ENCODE measurements at regions of chr3 and their contacts with region 1.

Region 1: DNA sequence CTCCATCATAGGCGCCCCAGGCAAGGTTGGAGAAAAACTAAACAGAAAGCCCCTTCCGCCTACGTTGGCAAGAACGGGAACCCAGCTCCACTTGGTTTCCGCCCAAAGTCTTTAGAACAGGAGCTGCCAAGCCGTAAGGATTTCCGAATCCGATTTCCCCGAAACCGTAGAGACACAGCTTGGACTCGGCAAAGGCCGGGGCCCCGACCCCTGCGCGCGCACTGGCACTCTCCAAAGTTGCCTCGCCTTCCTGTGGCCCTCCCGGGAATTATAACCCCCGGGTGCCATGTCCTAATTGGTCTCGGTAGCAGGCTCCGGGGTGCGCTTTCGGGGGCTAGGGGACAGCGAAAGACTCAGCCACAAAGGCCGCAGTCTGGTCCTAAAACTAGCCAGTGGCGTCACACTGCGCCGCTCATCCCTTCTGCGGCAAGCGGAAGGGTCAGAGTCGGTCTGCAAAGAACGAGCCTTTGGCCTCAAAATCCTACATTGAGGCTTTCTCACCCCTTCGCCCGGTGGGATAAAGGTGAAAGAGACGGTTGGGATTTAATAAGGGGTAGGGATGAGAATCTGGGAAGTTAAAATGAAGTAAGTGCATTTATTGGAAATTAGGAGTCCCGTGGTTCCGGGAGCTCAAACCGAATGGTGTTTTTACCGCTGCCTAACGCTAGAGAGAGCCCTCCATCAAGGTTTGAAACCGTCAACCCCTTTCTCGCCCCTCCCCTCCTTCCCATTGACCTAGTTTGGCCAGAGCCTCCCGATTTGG is 6.8 kb downstream of the BCL6 start:
- DNase-seq: peak; percentile 69
- H3K4me3 Mint-ChIP-seq: peak overlapping the region; percentile 94
- H3K27ac Mint-ChIP-seq: peak overlapping the region; percentile 70
- H3K4me1 Mint-ChIP-seq: peaks cover 38% of the 10 kb centered on the region
- H3K27me3 Mint-ChIP-seq: peaks cover 12% of the 10 kb centered on the region

Region 2: DNA sequence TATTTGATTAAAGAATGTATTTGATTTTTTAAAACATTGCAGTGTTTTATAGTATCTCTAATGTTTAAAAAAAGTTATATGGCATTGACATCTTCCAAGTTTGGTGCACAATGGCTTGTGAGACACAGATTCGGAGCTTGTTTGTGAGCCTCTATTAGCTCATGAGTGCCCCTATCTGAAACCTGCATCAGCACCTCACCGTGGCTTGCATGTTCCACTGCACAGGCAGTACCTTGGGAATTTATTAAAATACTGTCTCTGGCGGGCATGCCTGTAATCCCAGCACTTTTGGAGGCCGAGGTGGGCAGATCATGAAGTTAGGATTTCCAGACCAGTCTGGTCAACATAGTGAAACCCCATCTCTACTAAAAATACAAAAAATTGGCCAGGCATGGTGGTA is 29.4 kb before region 1 on chr3:
- intact Hi-C with region 1: no loop called
- DNase-seq: no peak
- H3K4me3 Mint-ChIP-seq: no peak overlapping the region
- H3K27ac Mint-ChIP-seq: no peak overlapping the region
- H3K4me1 Mint-ChIP-seq: peaks cover 4% of the 10 kb centered on the region
- H3K27me3 Mint-ChIP-seq: peaks cover 23% of the 10 kb centered on the region

Region 3: GRCh38 chr3:188286087-188286513 is 547.6 kb after region 1 on chr3:
- intact Hi-C with region 1: loop called (anchors 1 kb)
- DNase-seq: no peak
- H3K4me3 Mint-ChIP-seq: no peak overlapping the region
- H3K27ac Mint-ChIP-seq: peak overlapping the region; percentile 5
- H3K4me1 Mint-ChIP-seq: peaks cover 52% of the 10 kb centered on the region
- H3K27me3 Mint-ChIP-seq: no peaks in the 10 kb centered on the region

Region 4: GRCh38 chr3:188400494-188401243 is 662.2 kb after region 1 on chr3:
- intact Hi-C with region 1: loop called (anchors 2 kb)
- DNase-seq: peak; percentile 22
- H3K4me3 Mint-ChIP-seq: no peak overlapping the region
- H3K27ac Mint-ChIP-seq: peak overlapping the region; percentile 38
- H3K4me1 Mint-ChIP-seq: peaks cover 70% of the 10 kb centered on the region
- H3K27me3 Mint-ChIP-seq: no peaks in the 10 kb centered on the region

Region 5: DNA sequence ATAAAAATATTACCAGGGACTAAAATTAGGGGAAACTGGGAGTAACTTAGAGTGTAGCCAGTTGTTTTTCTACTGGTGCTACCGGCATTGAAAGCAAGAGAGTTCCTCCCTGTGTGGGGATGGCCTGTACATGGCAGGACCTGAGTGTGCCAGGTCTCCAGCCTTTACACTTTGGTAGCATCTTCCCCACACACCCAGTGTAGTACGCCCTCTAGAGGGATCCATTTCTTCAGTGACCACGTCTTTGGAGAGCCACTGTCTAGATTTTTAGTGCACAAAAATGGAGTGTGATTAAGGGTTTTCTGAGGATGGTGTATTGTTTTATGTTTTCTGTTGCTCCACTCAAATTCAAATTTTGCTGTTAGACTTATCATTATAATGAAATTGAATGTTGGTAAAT is 926.3 kb after region 1 on chr3:
- intact Hi-C with region 1: loop called (anchors 5 kb)
- DNase-seq: no peak
- H3K4me3 Mint-ChIP-seq: no peak overlapping the region
- H3K27ac Mint-ChIP-seq: no peak overlapping the region
- H3K4me1 Mint-ChIP-seq: peaks cover 8% of the 10 kb centered on the region
- H3K27me3 Mint-ChIP-seq: no peaks in the 10 kb centered on the region

Region 6: GRCh38 chr3:188788621-188789081 is 1050.1 kb after region 1 on chr3:
- intact Hi-C with region 1: loop called (anchors 1 kb)
- DNase-seq: peak; percentile 42
- H3K4me3 Mint-ChIP-seq: no peak overlapping the region
- H3K27ac Mint-ChIP-seq: no peak overlapping the region
- H3K4me1 Mint-ChIP-seq: peaks cover 2% of the 10 kb centered on the region
- H3K27me3 Mint-ChIP-seq: no peaks in the 10 kb centered on the region

Region 7: DNA sequence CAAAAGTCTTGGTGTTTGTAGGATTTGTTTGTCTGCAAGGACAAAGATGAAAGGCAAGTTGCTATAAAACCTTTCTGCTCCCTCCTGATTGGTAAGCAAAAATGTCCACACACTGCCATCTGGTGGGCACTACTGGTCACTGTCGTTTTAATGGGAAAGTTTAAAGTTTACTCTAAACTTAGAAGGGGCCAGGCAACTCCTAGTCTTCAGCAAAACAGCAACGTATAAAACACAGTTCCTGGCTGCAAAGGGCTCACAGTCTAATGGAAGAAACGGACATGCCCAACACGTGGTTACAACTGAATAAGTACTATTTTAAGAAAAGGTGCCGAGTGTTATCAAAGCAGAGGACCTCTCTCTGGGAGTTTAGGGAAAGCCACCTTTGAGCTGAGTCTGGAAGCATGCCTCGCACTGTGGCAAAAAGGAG is 1409.6 kb after region 1 on chr3:
- intact Hi-C with region 1: loop called (anchors 1 kb)
- DNase-seq: peak; percentile 52
- H3K4me3 Mint-ChIP-seq: no peak overlapping the region
- H3K27ac Mint-ChIP-seq: no peak overlapping the region
- H3K4me1 Mint-ChIP-seq: peaks cover 41% of the 10 kb centered on the region
- H3K27me3 Mint-ChIP-seq: peaks cover 7% of the 10 kb centered on the region

Measured in activated T-helper 2 cell treated with anti-CD3 and anti-CD28 coated beads, Interferon-gamma antibody, Interleukin-2, Interleukin-4, amounts not matched to agents 10 μg/mL and 5 μg/mL and 100 μg/mL, durations not matched to agents 14 hours and 24 hours and 36 hours (primary cell).